ENCODE measurements at regions of chr2 and their contacts with region 1.

Region 1: DNA sequence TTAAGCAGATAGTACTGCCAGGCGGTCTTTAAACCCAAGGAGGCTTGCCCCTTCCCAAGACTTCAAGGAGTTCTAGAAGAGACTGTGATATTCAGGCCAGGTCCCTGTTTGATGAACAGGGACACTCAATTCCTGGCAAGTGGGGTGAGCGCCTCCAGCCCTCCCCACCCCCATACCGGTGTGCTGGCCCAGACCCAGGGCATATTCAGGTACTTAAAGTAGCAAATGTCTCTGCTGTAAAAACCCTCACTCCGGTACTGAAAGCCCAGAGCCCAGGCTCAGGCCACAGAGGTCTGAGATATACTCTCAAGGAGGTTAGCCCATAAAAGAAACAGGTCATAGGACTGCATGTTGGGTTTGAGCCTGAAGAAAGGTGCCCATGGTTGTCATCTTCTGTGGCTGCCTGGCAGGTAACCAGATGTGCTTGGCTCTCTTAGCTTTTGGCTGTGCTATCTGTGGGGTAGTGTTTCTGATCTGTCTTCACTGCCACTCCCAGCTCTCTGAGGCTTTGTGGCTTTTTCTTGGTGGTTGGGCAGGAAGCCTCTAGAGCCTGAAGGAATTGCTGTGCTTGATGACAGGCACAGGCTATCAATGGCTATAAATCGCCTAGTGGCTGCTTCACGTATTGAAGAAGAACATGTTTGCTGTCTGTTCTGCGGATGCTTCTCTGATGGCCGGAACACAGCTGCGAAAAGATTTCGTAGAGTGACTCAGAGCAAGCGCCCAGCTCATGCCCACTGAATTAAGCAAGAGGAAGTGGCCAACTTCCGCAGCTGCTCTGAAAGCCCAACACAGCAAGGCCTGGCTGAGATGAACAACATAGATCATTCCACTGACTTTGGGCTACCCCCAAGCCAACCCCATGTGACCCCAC is 63.3 kb upstream of the ALPP start:
- DNase-seq: peak; percentile 47 to 84 (median 65)
- ATAC-seq: peak; percentile 82 to 90 (median 88)
- H3K4me3 ChIP-seq: peak overlapping the region; percentile 9 to 44
- H3K4me3 Mint-ChIP-seq: peak overlapping the region; percentile 46 to 77 (median 46)
- H3K27ac ChIP-seq: peak overlapping the region; percentile 85
- H3K27ac Mint-ChIP-seq: peak overlapping the region; percentile 94 to 98
- H3K4me1 ChIP-seq: peaks cover 63 to 82% of the 10 kb centered on the region in 2 experiments
- H3K4me1 Mint-ChIP-seq: peaks cover 95 to 98% (median 96%) of the 10 kb centered on the region in 3 donors
- H3K27me3 ChIP-seq: no peaks in the 10 kb centered on the region
- H3K27me3 Mint-ChIP-seq: no peaks in the 10 kb centered on the region

Region 2: DNA sequence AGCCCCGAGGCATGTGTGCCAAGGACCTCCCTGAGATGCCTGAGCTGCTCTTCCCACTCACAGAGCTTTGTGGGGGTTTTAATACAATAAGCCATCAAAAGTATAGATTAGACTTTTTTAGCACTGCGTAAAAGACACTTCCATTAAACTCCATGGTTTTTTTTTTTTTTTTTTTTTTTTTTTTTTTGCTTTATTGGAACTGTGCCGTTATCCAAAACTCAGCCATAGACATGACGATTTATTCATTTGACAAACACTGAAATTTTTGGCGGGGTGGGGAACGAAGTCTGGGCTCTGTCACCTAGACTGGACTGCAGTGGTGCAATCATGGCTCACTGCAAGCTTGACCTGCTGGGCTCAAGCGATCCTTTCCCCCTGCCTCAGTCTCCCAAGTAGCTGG is 407.5 kb before region 1 on chr2:
- CTCF ChIA-PET with region 1: interaction called, 3 to 17 read pairs
- POLR2A ChIA-PET with region 1: no interaction called
- DNase-seq: no peak
- ATAC-seq: no peak
- H3K4me3 ChIP-seq: no peak overlapping the region
- H3K4me3 Mint-ChIP-seq: no peak overlapping the region
- H3K27ac ChIP-seq: no peak overlapping the region
- H3K27ac Mint-ChIP-seq: no peak overlapping the region
- H3K4me1 ChIP-seq: peaks cover 5 to 11% of the 10 kb centered on the region in 2 experiments
- H3K4me1 Mint-ChIP-seq: peaks cover 12 to 16% (median 12%) of the 10 kb centered on the region in 3 donors
- H3K27me3 ChIP-seq: no peaks in the 10 kb centered on the region
- H3K27me3 Mint-ChIP-seq: no peaks in the 10 kb centered on the region

Region 3: GRCh38 chr2:232058063-232058877 is 257.0 kb before region 1 on chr2:
- CTCF ChIA-PET with region 1: no interaction called
- POLR2A ChIA-PET with region 1: no interaction called
- DNase-seq: no peak
- ATAC-seq: no peak
- H3K4me3 ChIP-seq: no peak overlapping the region
- H3K4me3 Mint-ChIP-seq: no peak overlapping the region
- H3K27ac ChIP-seq: no peak overlapping the region
- H3K27ac Mint-ChIP-seq: no peak overlapping the region
- H3K4me1 ChIP-seq: peaks cover 0 to 2% of the 10 kb centered on the region in 2 experiments
- H3K4me1 Mint-ChIP-seq: peaks cover 37 to 43% (median 41%) of the 10 kb centered on the region in 3 donors
- H3K27me3 ChIP-seq: no peaks in the 10 kb centered on the region
- H3K27me3 Mint-ChIP-seq: no peaks in the 10 kb centered on the region

Region 4: DNA sequence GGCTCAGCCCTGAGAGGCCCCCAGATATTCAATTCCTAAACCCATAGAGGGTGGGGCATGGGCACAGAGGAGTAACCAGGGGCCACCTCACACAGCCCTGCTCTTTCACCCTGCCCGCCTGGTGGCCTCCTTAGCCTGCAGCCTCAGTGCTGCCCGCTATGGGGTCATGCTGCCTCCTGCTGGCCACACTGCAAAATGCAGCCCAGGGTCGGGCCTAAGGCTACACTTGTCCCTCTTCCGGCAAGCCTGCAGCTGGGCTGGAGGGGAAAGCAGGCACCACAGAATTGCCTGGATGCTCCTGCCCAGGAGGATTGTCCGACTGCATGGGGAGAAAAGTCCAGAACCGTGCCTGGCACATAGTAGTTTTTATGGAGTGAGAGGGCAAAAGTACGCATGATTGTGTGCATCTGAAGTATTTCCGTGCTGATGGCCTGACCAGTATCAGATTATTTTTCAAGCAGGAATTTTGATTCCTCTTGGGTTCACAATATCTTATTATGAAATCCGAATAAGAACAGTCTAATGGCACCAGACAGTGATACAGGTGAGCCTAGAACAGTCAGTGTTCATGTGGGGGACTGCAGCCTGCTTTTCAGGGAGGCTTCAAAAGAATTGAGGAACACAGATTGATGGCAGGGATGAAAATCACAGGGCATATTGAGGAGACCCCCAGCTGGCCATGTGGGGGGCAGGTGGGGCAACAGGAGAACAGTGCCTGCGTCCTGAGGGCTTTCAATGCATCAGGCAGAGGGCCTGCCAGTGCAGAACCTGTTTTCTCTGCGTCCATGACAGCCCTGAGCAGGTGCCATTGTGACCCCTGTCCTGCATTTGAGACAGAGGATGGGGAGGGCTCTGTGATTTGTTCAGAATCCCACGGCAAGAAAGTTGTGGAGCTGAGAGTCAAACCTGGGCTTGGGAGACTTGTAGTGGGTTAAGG is 12.1 kb after region 1 on chr2:
- CTCF ChIA-PET with region 1: interaction called, 6 to 11 read pairs
- POLR2A ChIA-PET with region 1: no interaction called
- DNase-seq: peak; percentile 55 to 90 (median 79)
- ATAC-seq: peak; percentile 80 to 89 (median 81)
- H3K4me3 ChIP-seq: no peak overlapping the region
- H3K4me3 Mint-ChIP-seq: no peak overlapping the region
- H3K27ac ChIP-seq: no peak overlapping the region
- H3K27ac Mint-ChIP-seq: no peak overlapping the region
- H3K4me1 ChIP-seq: peaks cover 9 to 32% of the 10 kb centered on the region in 2 experiments
- H3K4me1 Mint-ChIP-seq: peaks cover 17 to 25% (median 19%) of the 10 kb centered on the region in 3 donors
- H3K27me3 ChIP-seq: no peaks in the 10 kb centered on the region
- H3K27me3 Mint-ChIP-seq: no peaks in the 10 kb centered on the region

Measured in T-cell (primary cell).